ENCODE measurements at regions of chr14 and their contacts with region 1.

Region 1: GRCh38 chr14:20697273-20698017 is 8.9 kb downstream of the ANG start:
- DNase-seq: peak in 3 of 4 donors; percentile 49 to 79 (median 60)
- ATAC-seq: peak; percentile 98
- H3K4me3 ChIP-seq: no peak overlapping the region
- H3K27ac ChIP-seq: no peak overlapping the region
- H3K4me1 ChIP-seq: peaks cover 0 to 11% of the 10 kb centered on the region in 2 donors
- H3K27me3 ChIP-seq: no peaks in the 10 kb centered on the region
- CTCF ChIP-seq: peak; percentile 68 to 81

Region 2: DNA sequence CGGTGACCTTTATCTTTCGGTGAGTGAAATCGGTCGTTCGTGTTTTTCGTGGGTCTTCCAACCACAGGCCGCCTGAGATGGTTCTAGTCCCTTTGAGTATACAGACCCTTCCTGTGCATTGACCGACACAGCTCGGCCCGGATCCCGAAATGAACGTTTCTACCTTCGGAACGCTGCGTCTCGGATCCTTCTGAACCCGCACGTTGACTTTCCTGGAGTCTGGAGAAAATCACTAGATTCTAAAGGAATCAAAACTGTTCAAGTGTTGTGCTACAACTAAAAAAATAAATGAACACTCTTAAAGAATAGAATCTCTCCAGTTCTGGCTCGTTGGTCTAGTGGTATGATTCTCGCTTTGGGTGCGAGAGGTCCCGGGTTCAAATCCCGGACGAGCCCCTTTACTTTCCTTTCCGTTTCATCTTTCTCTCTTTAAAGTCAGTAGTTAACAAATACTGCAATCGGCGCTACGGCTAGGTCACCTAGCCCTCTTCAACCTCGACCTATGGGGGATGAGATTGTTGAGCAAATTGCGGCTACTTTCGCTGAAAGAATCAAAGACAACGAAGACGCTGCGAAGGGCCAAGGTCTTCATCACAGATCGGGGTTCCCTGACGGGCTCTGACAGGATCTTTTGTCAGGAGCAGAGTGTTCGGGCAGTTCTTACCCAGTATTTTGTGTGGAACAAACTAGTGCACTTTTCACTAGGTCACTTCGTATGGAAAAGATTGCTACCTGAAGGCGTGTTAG is 64.6 kb before region 1 on chr14:
- intact Hi-C with region 1: no loop called
- DNase-seq: peak in 1 of 4 donors; percentile 39
- ATAC-seq: peak; percentile 71
- H3K4me3 ChIP-seq: peak overlapping the region in 1 of 2 donors; percentile 27
- H3K27ac ChIP-seq: no peak overlapping the region
- H3K4me1 ChIP-seq: peaks cover 16 to 17% of the 10 kb centered on the region in 2 donors
- H3K27me3 ChIP-seq: peaks cover 36 to 100% of the 10 kb centered on the region in 2 donors
- CTCF ChIP-seq: no peak

Region 3: GRCh38 chr14:20836668-20837338 is 139.4 kb after region 1 on chr14:
- intact Hi-C with region 1: no loop called
- DNase-seq: peak in 1 of 4 donors; percentile 44
- ATAC-seq: peak; percentile 86
- H3K4me3 ChIP-seq: no peak overlapping the region
- H3K27ac ChIP-seq: no peak overlapping the region
- H3K4me1 ChIP-seq: peaks cover 0 to 2% of the 10 kb centered on the region in 2 donors
- H3K27me3 ChIP-seq: no peaks in the 10 kb centered on the region
- CTCF ChIP-seq: peak; percentile 43 to 48

Region 4: DNA sequence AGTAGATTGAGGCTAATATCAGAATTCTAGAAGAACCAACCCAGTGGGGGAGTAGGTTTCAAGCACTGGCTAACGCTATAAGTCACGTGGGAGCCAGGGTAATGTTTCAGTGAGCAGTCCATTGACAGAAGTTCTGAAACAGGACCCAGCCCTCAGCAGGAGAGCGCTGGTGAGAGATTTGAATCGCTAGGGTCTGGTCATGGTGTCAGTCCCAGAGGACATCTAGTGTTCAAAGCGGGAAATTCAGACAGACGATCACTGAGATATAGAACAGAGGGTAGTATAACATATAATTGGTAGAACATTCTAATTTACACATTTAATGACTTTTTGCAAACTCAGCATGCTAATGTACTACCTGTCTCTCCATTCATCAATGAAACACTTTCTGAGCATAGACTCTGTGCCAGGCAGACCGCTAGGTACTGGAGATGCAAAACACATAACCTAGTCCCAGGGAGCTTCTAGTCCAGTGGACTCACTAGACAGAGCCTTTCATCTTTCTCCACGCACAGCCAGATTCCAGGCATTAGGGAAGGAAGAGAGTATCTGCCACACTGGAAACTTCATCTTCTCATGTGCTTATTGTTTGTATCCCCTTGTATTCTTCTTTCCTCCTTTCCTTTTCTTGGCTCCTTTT is 158.3 kb after region 1 on chr14:
- intact Hi-C with region 1: loop called in 1 of 2 experiments (anchors 5 kb)
- DNase-seq: peak in 2 of 4 donors; percentile 65 to 76
- ATAC-seq: peak; percentile 97
- H3K4me3 ChIP-seq: no peak overlapping the region
- H3K27ac ChIP-seq: no peak overlapping the region
- H3K4me1 ChIP-seq: peaks cover 0 to 4% of the 10 kb centered on the region in 2 donors
- H3K27me3 ChIP-seq: no peaks in the 10 kb centered on the region
- CTCF ChIP-seq: peak; percentile 71 to 78

Region 5: DNA sequence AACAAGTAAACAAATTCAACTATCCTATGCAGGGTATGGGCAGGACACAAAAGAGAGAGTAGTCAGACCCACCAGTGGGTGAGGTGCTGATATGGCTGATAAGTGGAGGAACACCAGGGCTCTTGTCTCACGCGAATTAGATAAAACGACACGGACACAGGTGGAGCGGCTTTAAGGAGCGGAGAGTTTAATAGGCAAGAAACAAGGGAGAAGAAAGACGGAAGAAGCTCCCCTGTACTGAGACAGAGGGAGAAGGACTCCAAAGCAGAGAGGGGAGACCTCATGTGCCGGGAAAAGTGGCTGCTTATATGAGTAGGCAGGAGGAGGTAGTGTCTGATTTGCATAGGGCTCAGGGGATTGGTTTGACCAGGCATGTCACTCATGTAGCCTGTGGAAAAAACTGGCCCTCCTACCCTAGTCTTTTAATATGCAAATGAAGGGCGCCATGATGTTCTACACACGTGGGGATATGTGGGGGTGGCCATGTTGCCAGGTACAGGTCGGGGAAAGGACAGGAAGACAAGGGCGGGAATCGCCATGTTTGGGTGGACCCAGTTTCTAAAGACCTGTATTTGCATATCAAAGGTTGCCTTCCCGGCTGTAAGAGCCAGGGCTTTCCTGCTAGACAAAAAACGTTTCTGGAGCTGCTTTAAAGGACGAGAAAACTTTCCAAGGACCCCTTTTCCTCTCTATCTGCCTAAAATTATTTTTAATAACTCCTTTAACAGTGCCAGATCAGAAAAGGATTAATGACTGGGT is 611.2 kb after region 1 on chr14:
- intact Hi-C with region 1: no loop called
- DNase-seq: peak in 3 of 4 donors; percentile 42 to 85 (median 84)
- ATAC-seq: peak; percentile 93
- H3K4me3 ChIP-seq: peak overlapping the region; percentile 10 to 34
- H3K27ac ChIP-seq: peak overlapping the region; percentile 60 to 74
- H3K4me1 ChIP-seq: peaks cover 0 to 13% of the 10 kb centered on the region in 2 donors
- H3K27me3 ChIP-seq: no peaks in the 10 kb centered on the region
- CTCF ChIP-seq: no peak